A549 (cell line): ENCODE measurements at regions of chr7 and their contacts with region 1.

Region 1: GRCh38 chr7:33932832-33933468 is 27.6 kb downstream of the BMPER start:
- DNase-seq: peak; percentile 63 to 79
- ATAC-seq: peak; percentile 79 to 94
- H3K4me3 ChIP-seq: no peak overlapping the region
- H3K27ac ChIP-seq: peak overlapping the region; percentile 56 to 77
- H3K4me1 ChIP-seq: peaks cover 19% of the 10 kb centered on the region
- CTCF ChIP-seq: peak; percentile 88
- EP300 ChIP-seq: no peak
- POLR2A ChIP-seq: no peak
- RAD21 ChIP-seq: peak; percentile 70 to 81

Region 2: GRCh38 chr7:33185786-33186185 is 747.2 kb before region 1 on chr7:
- CTCF ChIA-PET with region 1: interaction called, 11 read pairs
- POLR2A ChIA-PET with region 1: no interaction called
- DNase-seq: peak; percentile 33 to 62
- ATAC-seq: peak; percentile 85 to 95; a peak in 5 of 6 replicates
- H3K4me3 ChIP-seq: no peak overlapping the region
- H3K27ac ChIP-seq: no peak overlapping the region
- H3K4me1 ChIP-seq: peaks cover 8% of the 10 kb centered on the region; the same call in 2 of the 3 replicates
- CTCF ChIP-seq: peak; percentile 87
- EP300 ChIP-seq: no peak
- POLR2A ChIP-seq: no peak
- RAD21 ChIP-seq: peak; percentile 86 to 89

Region 3: GRCh38 chr7:33716581-33717477 is 216.1 kb before region 1 on chr7:
- CTCF ChIA-PET with region 1: interaction called, 14 read pairs
- POLR2A ChIA-PET with region 1: no interaction called
- DNase-seq: peak; percentile 14 to 68
- ATAC-seq: peak; percentile 51 to 77; a peak in 3 of 6 replicates
- H3K4me3 ChIP-seq: no peak overlapping the region
- H3K27ac ChIP-seq: 0 out of 6 replicates have a peak overlapping the region, but pooled peaks of 1 of the 2 experiments have one; percentile 5
- H3K4me1 ChIP-seq: peaks cover 11% of the 10 kb centered on the region
- CTCF ChIP-seq: peak; percentile 93
- EP300 ChIP-seq: no peak
- POLR2A ChIP-seq: no peak
- RAD21 ChIP-seq: peak; percentile 61 to 68

Region 4: DNA sequence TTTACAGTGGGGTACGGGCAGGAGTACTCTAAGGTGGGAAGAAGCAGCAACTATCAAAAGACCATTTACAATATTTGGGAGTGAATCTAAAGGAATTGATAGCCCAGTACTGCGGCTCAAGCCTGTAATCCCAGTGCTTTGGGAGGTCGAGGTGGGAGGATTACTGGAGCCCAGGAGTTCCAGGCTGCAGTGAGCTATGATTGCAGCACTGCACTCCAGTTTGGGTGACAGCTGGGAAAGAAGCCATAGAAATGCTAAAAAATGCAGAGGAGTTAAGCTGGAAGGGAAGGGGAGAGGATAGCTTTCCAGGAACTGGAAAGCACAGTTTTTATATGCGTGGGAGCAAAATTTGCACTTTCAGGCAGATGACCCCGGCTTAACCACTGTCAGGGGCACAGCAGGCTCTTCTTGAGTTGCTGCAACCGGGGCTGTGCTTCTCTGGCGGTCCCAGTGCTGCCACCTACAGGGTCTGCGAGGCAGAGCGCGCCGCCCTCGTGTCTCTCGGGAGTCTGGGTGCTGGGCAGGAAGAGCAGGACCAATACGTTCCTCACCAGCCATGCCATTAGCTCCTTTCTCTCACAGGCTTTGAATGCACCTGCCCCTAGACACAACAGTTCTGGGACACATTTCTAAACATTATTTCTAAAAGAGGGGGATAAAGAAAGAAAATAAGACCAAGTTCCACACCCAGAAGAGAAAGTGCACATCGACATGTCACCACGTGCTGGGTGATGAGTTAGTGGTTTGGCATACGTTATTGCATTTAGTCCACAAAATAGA is 37.7 kb before region 1 on chr7:
- CTCF ChIA-PET with region 1: interaction called, 12 read pairs
- POLR2A ChIA-PET with region 1: no interaction called
- DNase-seq: peak; percentile 72 to 80
- ATAC-seq: peak; percentile 99 to 100
- H3K4me3 ChIP-seq: no peak overlapping the region
- H3K27ac ChIP-seq: no peak overlapping the region
- H3K4me1 ChIP-seq: peaks cover 4% of the 10 kb centered on the region; the same call in 2 of the 3 replicates
- CTCF ChIP-seq: peak; percentile 80
- EP300 ChIP-seq: no peak
- POLR2A ChIP-seq: no peak
- RAD21 ChIP-seq: peak; percentile 74 to 83

Region 5: GRCh38 chr7:33921216-33921938 is 11.6 kb before region 1 on chr7:
- CTCF ChIA-PET with region 1: interaction called, 30 read pairs
- POLR2A ChIA-PET with region 1: no interaction called
- DNase-seq: no peak
- ATAC-seq: no peak
- H3K4me3 ChIP-seq: no peak overlapping the region
- H3K27ac ChIP-seq: no peak overlapping the region
- H3K4me1 ChIP-seq: no peaks in the 10 kb centered on the region
- CTCF ChIP-seq: no peak
- EP300 ChIP-seq: no peak
- POLR2A ChIP-seq: no peak
- RAD21 ChIP-seq: no peak

Region 6: DNA sequence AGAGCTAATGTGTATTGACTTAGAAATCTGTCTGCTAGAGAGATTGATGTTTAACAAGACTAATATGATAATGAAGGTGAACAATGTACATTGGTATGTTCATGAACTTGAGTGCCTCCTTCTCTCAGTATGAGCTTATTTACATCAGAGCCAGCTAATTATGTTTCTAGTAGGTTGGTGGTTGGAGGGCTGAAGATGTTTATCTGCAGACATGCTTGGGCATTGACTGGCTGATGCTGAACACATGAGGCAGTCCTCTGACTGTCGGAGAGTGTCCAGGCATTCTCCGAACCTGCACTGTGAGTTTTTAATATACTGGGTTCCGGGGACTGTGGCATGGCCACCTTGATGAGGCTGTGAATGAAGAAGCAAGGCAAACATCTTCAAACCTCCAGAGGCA is 19.9 kb after region 1 on chr7:
- CTCF ChIA-PET with region 1: interaction called, 22 read pairs
- POLR2A ChIA-PET with region 1: no interaction called
- DNase-seq: no peak
- ATAC-seq: no peak
- H3K4me3 ChIP-seq: no peak overlapping the region
- H3K27ac ChIP-seq: no peak overlapping the region
- H3K4me1 ChIP-seq: 0 out of 3 replicates have a peak, but pooled peaks cover 3% of the 10 kb centered on the region
- CTCF ChIP-seq: no peak
- EP300 ChIP-seq: no peak
- POLR2A ChIP-seq: no peak
- RAD21 ChIP-seq: no peak